ENCODE measurements at regions of chr11 and their contacts with region 1.

Region 1: GRCh38 chr11:75388386-75389275 is 10.7 kb upstream of the RPS3 start:
- DNase-seq: peak; percentile 80 to 93 (median 86)
- ATAC-seq: peak; percentile 78 to 91 (median 88)
- H3K4me3 ChIP-seq: no peak overlapping the region
- H3K27ac ChIP-seq: peak overlapping the region in 2 of 4 donors; percentile 69 to 80
- H3K4me1 ChIP-seq: peaks cover 0 to 6% (median 4%) of the 10 kb centered on the region in 3 donors
- H3K27me3 ChIP-seq: no peaks in the 10 kb centered on the region
- CTCF ChIP-seq: peak; percentile 58 to 73 (median 66)

Region 2: GRCh38 chr11:75280227-75280701 is 108.4 kb before region 1 on chr11:
- intact Hi-C with region 1: loop called in 2 of 3 experiments (anchors 5 kb)
- DNase-seq: peak; percentile 56 to 86 (median 78)
- ATAC-seq: peak; percentile 80 to 95 (median 90)
- H3K4me3 ChIP-seq: no peak overlapping the region
- H3K27ac ChIP-seq: no peak overlapping the region
- H3K4me1 ChIP-seq: no peaks in the 10 kb centered on the region
- H3K27me3 ChIP-seq: no peaks in the 10 kb centered on the region
- CTCF ChIP-seq: peak; percentile 92 to 95 (median 94)

Region 3: GRCh38 chr11:75328426-75329277 is 60.0 kb before region 1 on chr11:
- intact Hi-C with region 1: loop called in 2 of 3 experiments (anchors 5 to 10 kb)
- DNase-seq: peak in 5 of 6 donors; percentile 69 to 86 (median 78)
- ATAC-seq: peak; percentile 44 to 83 (median 76)
- H3K4me3 ChIP-seq: no peak overlapping the region
- H3K27ac ChIP-seq: peak overlapping the region in 2 of 4 donors; percentile 6 to 26
- H3K4me1 ChIP-seq: peaks cover 35 to 61% (median 40%) of the 10 kb centered on the region in 3 donors
- H3K27me3 ChIP-seq: no peaks in the 10 kb centered on the region
- CTCF ChIP-seq: peak in 2 of 4 donors; percentile 31 to 40